ENCODE measurements at regions of chr10 and their contacts with region 1.

Region 1: DNA sequence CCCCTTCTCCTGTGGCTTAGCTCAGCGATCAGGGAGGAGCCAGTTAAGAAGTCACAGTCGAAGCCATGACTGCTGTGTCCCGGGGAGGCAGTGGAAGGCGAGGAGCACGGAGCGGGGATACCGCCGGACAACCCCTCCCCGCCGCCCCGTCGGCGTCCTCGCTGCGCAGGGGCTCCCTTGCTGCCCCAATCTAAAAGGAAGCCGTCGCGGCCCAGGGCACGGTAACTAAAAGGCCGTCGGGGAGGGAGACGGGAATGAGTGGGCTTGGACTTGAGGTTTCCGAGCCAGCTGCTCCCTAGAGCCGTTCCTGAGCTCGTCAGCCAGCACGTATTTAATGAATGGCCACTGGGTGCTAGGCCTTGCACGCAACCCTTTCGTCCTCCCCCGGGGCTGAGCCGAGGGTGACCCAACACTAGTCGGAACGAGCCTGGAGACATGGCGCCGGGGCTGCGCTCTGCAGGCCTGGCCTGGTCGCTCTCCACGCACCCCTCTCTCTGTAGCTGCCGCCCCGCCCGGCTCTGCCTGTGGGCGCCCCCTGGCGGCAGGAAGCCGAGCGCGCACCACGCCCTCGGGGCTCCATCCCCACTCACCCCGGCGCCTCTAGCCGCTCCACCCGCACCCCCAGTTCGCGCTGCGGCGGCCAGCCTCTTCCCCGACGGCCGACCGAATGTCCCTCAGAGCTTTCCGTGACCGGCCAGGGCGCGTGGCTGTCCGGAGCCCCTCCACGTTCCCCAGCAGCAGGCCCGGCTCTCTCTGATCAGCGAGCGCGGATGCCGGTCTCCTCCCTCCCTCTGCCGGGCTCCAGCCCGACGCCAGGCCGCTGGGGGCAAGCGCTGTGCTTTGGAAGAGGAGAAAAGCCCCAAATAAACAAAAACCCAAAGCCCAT is 29.3 kb upstream of the KCNK18 start:
- H3K4me3 ChIP-seq: peak overlapping the region; percentile 29
- H3K27ac ChIP-seq: no peak overlapping the region
- H3K4me1 ChIP-seq: no peaks in the 10 kb centered on the region
- CTCF ChIP-seq: peak; percentile 93

Region 2: GRCh38 chr10:116891208-116891607 is 276.8 kb before region 1 on chr10:
- CTCF ChIA-PET with region 1: interaction called, 16 read pairs
- POLR2A ChIA-PET with region 1: no interaction called
- H3K4me3 ChIP-seq: no peak overlapping the region
- H3K27ac ChIP-seq: no peak overlapping the region
- H3K4me1 ChIP-seq: peaks cover 23% of the 10 kb centered on the region
- CTCF ChIP-seq: no peak

Region 3: DNA sequence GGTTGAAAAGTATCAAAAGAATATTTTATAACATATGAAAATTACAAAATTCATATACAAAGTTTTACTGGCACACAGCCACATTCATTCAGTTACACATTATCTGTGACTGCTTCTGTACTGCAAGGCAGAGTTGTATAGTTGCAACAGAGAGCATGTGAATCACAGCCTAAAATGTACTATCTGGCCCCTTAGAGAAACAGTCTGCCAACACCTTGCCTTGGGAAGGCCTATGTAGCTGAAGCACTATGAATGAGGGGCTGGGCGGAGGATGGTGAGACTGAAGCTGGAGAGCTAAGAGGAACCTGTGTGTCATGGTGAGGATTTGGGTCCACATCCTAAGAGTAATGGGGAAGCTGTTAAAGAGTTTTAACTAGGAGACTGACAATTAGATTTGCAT is 171.5 kb after region 1 on chr10:
- CTCF ChIA-PET with region 1: no interaction called
- POLR2A ChIA-PET with region 1: no interaction called
- H3K4me3 ChIP-seq: no peak overlapping the region
- H3K27ac ChIP-seq: no peak overlapping the region
- H3K4me1 ChIP-seq: 0 out of 2 replicates have a peak, but pooled peaks cover 2% of the 10 kb centered on the region
- CTCF ChIP-seq: no peak